ENCODE measurements at regions of chr15 and their contacts with region 1.

Region 1: GRCh38 chr15:51776952-51777574 is 25.7 kb downstream of the TMOD2 start:
- DNase-seq: peak; percentile 66
- H3K4me3 ChIP-seq: no peak overlapping the region
- H3K4me3 Mint-ChIP-seq: no peak overlapping the region
- H3K27ac Mint-ChIP-seq: no peak overlapping the region
- H3K4me1 ChIP-seq: no peaks in the 10 kb centered on the region
- H3K4me1 Mint-ChIP-seq: no peaks in the 10 kb centered on the region
- H3K27me3 ChIP-seq: no peaks in the 10 kb centered on the region
- H3K27me3 Mint-ChIP-seq: peaks cover 4% of the 10 kb centered on the region
- CTCF ChIP-seq: peak; percentile 73

Region 2: GRCh38 chr15:51649659-51650521 is 127.2 kb before region 1 on chr15:
- CTCF ChIA-PET with region 1: interaction called, 111 read pairs
- POLR2A ChIA-PET with region 1: interaction called, 3 read pairs
- intact Hi-C with region 1: loop called (anchors 1 kb)
- DNase-seq: peak in 1 of 2 experiments; percentile 64
- H3K4me3 ChIP-seq: no peak overlapping the region
- H3K4me3 Mint-ChIP-seq: no peak overlapping the region
- H3K27ac Mint-ChIP-seq: no peak overlapping the region
- H3K4me1 ChIP-seq: no peaks in the 10 kb centered on the region
- H3K4me1 Mint-ChIP-seq: no peaks in the 10 kb centered on the region
- H3K27me3 ChIP-seq: no peaks in the 10 kb centered on the region
- H3K27me3 Mint-ChIP-seq: peaks cover 4% of the 10 kb centered on the region
- CTCF ChIP-seq: peak; percentile 52 to 70

Region 3: GRCh38 chr15:51737280-51738017 is 39.6 kb before region 1 on chr15 and contains the start of gene LYSMD2:
- CTCF ChIA-PET with region 1: interaction called, 11 read pairs
- POLR2A ChIA-PET with region 1: no interaction called
- intact Hi-C with region 1: no loop called
- DNase-seq: peak in 1 of 2 experiments; percentile 40
- H3K4me3 ChIP-seq: peak within 1 kb of the TSS; percentile 41
- H3K4me3 Mint-ChIP-seq: peak within 1 kb of the TSS; percentile 65
- H3K27ac Mint-ChIP-seq: no peak within 1 kb of the TSS
- H3K4me1 ChIP-seq: no peaks in the 10 kb centered on the region
- H3K4me1 Mint-ChIP-seq: no peaks in the 10 kb centered on the region
- H3K27me3 ChIP-seq: no peaks in the 10 kb centered on the region
- H3K27me3 Mint-ChIP-seq: peaks cover 13% of the 10 kb centered on the region
- CTCF ChIP-seq: no peak
- total RNA-seq, gene LYSMD2: 0.29 and 0.63 TPM in 2 replicates